GM10248 (cell line): ENCODE measurements at regions of chr6 and their contacts with region 1.

Region 1: DNA sequence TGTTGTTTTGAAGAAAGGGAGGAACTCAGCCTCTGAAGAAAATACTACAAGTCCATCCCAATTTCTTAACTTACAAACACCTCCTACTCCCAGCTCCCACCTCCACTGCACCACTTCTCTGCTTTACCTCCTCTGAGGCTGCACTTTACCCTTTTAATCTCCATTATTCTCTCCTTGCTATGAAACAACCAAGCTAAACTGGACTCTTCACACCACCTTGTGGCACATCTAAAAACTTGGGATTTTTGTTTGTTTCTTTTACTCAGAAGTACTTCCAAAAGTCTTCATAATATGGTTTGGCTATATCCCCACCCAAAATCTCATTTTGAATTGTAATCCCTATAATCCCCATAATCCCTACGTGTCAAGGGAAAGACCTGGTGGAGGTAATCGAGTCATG is 142.2 kb downstream of the MOXD1 start:
- DNase-seq: no peak
- CTCF ChIP-seq: no peak

Region 2: DNA sequence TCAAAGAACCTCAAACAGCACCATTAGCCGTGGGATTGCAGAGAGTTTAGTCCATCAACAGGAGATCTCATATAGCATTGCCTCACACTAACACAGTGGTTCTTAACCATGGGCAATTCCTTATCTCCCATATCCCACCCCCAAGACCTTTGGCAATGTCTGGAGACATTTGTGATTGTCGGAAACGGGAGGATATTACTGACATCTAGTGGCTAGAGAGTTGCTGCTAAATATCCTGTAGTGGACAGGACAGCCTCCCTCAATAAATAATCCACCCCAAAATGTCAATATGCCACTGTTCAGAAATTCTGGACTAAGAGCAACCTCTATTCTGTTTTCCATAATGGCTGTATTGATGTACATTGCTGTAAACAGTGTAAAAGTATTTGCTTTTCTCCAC is 97.8 kb before region 1 on chr6:
- CTCF ChIA-PET with region 1: no interaction called
- POLR2A ChIA-PET with region 1: no interaction called
- DNase-seq: no peak
- CTCF ChIP-seq: peak; percentile 57

Region 3: GRCh38 chr6:132270726-132271402 is 11.8 kb after region 1 on chr6:
- CTCF ChIA-PET with region 1: interaction called, 18 read pairs
- POLR2A ChIA-PET with region 1: no interaction called
- DNase-seq: no peak
- CTCF ChIP-seq: no peak